ENCODE measurements at regions of chr13 and their contacts with region 1.

Region 1: GRCh38 chr13:62357887-62358645 is 942.4 kb upstream of the PCDH20 start:
- DNase-seq: peak; percentile 27
- H3K4me3 ChIP-seq: no peak overlapping the region
- H3K27ac ChIP-seq: no peak overlapping the region
- H3K4me1 ChIP-seq: no peaks in the 10 kb centered on the region
- H3K27me3 ChIP-seq: no peaks in the 10 kb centered on the region
- CTCF ChIP-seq: peak; percentile 23 to 26
- POLR2A ChIP-seq: no peak

Region 2: DNA sequence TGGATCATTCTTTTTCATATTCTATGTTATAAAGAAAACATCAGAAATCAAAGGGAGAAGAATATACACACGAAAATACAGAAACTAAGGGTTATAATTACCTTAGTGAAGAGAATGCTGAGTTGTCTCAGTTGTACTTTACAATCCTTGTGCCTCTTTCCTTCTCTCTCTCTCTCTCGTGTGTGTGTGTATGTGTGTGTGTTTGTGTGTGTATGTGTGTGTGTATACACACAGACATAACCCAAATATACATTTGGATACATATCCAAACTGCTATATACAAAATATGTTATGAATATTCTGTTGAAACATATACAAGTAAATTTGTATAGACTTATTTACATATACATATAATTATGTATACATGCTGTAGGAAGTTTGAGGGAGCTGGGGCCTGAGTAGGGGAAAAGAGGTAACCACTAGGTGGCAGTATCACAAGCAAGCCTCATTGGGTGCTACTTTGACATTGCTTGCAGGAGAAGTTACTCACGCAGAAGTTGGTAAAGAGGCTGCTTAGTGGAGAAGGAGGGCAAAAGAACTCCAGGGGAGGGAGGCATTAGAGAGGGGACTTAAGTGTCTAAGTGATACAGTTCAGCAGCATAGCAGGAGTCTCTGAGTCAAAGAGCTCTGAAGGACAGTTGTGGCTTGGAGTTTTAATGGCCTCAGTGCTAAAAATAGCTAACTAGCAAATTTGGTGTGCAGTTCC is 477.3 kb before region 1 on chr13:
- CTCF ChIA-PET with region 1: no interaction called
- POLR2A ChIA-PET with region 1: no interaction called
- dilution Hi-C with region 1: no loop called
- intact Hi-C with region 1: loop called (anchors 2 kb)
- DNase-seq: peak; percentile 58
- H3K4me3 ChIP-seq: no peak overlapping the region
- H3K27ac ChIP-seq: no peak overlapping the region
- H3K4me1 ChIP-seq: no peaks in the 10 kb centered on the region
- H3K27me3 ChIP-seq: no peaks in the 10 kb centered on the region
- CTCF ChIP-seq: peak; percentile 48 to 70
- POLR2A ChIP-seq: no peak

Region 3: GRCh38 chr13:62014299-62014698 is 343.8 kb before region 1 on chr13:
- CTCF ChIA-PET with region 1: no interaction called
- POLR2A ChIA-PET with region 1: no interaction called
- dilution Hi-C with region 1: no loop called
- intact Hi-C with region 1: loop called (anchors 10 kb)
- DNase-seq: peak; percentile 11
- H3K4me3 ChIP-seq: no peak overlapping the region
- H3K27ac ChIP-seq: no peak overlapping the region
- H3K4me1 ChIP-seq: no peaks in the 10 kb centered on the region
- H3K27me3 ChIP-seq: no peaks in the 10 kb centered on the region
- CTCF ChIP-seq: no peak
- POLR2A ChIP-seq: no peak

Region 4: GRCh38 chr13:62119739-62120700 is 238.0 kb before region 1 on chr13:
- CTCF ChIA-PET with region 1: interaction called, 11 read pairs
- POLR2A ChIA-PET with region 1: no interaction called
- dilution Hi-C with region 1: no loop called
- intact Hi-C with region 1: loop called (anchors 1 kb)
- DNase-seq: peak; percentile 7
- H3K4me3 ChIP-seq: no peak overlapping the region
- H3K27ac ChIP-seq: no peak overlapping the region
- H3K4me1 ChIP-seq: no peaks in the 10 kb centered on the region
- H3K27me3 ChIP-seq: no peaks in the 10 kb centered on the region
- CTCF ChIP-seq: peak in 1 of 2 donors; percentile 8
- POLR2A ChIP-seq: no peak

Region 5: DNA sequence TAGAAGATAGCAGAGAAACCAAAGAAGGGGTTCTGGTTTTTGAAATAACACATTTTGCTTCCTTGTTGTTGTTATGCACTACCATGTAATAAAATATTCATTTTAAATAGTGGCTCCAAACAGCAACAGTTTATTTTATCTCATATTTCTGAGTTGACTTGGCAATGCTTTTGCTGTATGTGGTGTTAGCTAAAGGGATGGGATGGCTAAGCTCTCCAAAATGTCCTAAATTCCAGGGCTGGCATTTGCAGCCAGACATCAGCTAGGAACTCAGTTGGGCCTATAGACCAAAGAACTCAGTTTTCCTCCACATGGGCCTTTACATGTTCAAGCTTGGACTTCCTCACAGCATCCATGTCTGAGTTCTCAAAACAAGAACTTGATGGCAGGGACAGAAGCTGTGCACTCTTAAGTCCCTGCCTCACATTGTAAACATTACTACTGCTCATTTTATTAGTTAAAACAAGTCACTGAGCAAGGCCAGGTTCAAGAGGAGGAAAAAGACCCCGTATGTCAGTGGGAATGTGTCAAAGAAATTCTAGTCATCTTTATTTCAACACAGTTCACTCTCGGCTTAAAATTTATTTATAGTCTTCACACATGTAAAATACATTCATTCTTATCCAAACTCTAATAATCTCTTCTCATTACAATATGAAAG is 123.2 kb before region 1 on chr13:
- CTCF ChIA-PET with region 1: no interaction called
- POLR2A ChIA-PET with region 1: no interaction called
- dilution Hi-C with region 1: no loop called
- intact Hi-C with region 1: no loop called
- DNase-seq: no peak
- H3K4me3 ChIP-seq: no peak overlapping the region
- H3K27ac ChIP-seq: no peak overlapping the region
- H3K4me1 ChIP-seq: no peaks in the 10 kb centered on the region
- H3K27me3 ChIP-seq: no peaks in the 10 kb centered on the region
- CTCF ChIP-seq: no peak
- POLR2A ChIP-seq: no peak

Region 6: GRCh38 chr13:62320129-62321108 is 37.6 kb before region 1 on chr13:
- CTCF ChIA-PET with region 1: interaction called, 3 read pairs
- POLR2A ChIA-PET with region 1: no interaction called
- dilution Hi-C with region 1: no loop called
- intact Hi-C with region 1: loop called (anchors 5 kb)
- DNase-seq: peak; percentile 58
- H3K4me3 ChIP-seq: no peak overlapping the region
- H3K27ac ChIP-seq: no peak overlapping the region
- H3K4me1 ChIP-seq: no peaks in the 10 kb centered on the region
- H3K27me3 ChIP-seq: no peaks in the 10 kb centered on the region
- CTCF ChIP-seq: peak in 1 of 2 donors; percentile 23
- POLR2A ChIP-seq: no peak

Measured in endothelial cell of umbilical vein (primary cell).